ENCODE measurements at regions of chr11 and their contacts with region 1.

Region 1: DNA sequence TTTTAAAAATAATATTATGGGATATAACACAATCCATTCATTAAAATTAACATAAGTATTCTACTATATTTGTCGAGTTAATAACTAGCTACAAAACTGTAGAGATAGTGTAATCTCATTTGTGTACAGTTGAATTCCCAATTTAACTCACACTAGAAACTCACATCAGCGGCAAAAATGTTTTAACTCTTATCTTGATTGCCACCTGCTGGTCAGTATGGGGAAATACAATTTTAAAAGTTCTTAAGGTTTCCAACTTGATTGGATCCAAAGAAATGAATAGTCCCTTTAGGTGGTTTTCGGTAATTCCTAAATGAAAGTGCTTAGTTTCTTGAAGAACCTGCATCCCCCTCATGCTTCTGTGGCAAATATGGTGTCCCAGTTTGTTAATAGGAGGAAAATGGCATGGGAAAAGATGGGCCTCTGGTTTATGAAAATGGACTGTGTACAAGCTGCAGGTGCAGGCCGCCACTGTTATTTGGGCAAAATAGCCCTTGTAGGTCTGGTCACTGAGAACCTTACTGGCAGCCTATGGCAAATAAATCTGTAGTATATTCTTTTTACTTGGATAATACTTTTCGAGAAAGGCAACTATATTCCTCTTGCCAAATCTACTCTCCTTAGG is 33.7 kb upstream of the SLC17A6 start:
- DNase-seq: no peak
- ATAC-seq: peak in 3 of 4 donors; percentile 69 to 78 (median 77)
- H3K4me3 ChIP-seq: no peak overlapping the region
- H3K27ac ChIP-seq: no peak overlapping the region
- H3K4me1 ChIP-seq: no peaks in the 10 kb centered on the region
- H3K27me3 ChIP-seq: no peaks in the 10 kb centered on the region
- CTCF ChIP-seq: peak; percentile 35 to 59 (median 54)

Region 2: GRCh38 chr11:22244986-22245592 is 59.4 kb before region 1 on chr11:
- intact Hi-C with region 1: loop called in 1 of 3 experiments (anchors 10 kb)
- DNase-seq: peak; percentile 10 to 54 (median 28)
- ATAC-seq: peak; percentile 55 to 96 (median 90)
- H3K4me3 ChIP-seq: no peak overlapping the region
- H3K27ac ChIP-seq: no peak overlapping the region
- H3K4me1 ChIP-seq: no peaks in the 10 kb centered on the region
- H3K27me3 ChIP-seq: no peaks in the 10 kb centered on the region
- CTCF ChIP-seq: peak in 3 of 4 donors; percentile 41 to 52 (median 43)

Region 3: DNA sequence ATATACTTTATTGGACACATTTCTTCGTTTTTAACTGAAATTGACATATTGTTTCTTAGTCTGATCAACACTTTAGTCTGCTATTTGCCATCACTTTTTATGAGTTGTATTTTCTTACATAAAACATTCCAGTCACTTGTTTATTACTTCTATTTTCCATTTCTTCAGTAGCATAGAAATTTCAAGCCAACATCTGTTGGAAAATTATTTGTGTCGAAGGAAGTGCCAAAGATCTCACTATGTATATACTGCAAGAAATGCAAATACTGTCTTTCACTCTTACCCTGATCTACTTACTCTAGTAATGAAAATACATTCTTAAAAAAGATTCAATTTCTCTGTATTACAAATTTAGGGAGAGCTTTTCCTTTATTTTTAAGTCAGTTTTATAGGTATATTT is 139.6 kb after region 1 on chr11:
- intact Hi-C with region 1: no loop called
- DNase-seq: no peak
- ATAC-seq: no peak
- H3K4me3 ChIP-seq: no peak overlapping the region
- H3K27ac ChIP-seq: no peak overlapping the region
- H3K4me1 ChIP-seq: no peaks in the 10 kb centered on the region
- H3K27me3 ChIP-seq: no peaks in the 10 kb centered on the region
- CTCF ChIP-seq: no peak

Measured in pancreas (tissue), 10 donors.